ENCODE measurements at regions of chr10 and their contacts with region 1.

Region 1: GRCh38 chr10:69639291-69640195 is 9.5 kb downstream of the FAM241B start:
- DNase-seq: peak; percentile 67 to 77 (median 71)
- ATAC-seq: peak; percentile 74
- H3K4me3 ChIP-seq: no peak overlapping the region
- H3K27ac ChIP-seq: no peak overlapping the region
- H3K4me1 ChIP-seq: no peaks in the 10 kb centered on the region
- H3K27me3 ChIP-seq: no peaks in the 10 kb centered on the region
- CTCF ChIP-seq: peak; percentile 77 to 81 (median 80)
- POLR2A ChIP-seq: no peak

Region 2: DNA sequence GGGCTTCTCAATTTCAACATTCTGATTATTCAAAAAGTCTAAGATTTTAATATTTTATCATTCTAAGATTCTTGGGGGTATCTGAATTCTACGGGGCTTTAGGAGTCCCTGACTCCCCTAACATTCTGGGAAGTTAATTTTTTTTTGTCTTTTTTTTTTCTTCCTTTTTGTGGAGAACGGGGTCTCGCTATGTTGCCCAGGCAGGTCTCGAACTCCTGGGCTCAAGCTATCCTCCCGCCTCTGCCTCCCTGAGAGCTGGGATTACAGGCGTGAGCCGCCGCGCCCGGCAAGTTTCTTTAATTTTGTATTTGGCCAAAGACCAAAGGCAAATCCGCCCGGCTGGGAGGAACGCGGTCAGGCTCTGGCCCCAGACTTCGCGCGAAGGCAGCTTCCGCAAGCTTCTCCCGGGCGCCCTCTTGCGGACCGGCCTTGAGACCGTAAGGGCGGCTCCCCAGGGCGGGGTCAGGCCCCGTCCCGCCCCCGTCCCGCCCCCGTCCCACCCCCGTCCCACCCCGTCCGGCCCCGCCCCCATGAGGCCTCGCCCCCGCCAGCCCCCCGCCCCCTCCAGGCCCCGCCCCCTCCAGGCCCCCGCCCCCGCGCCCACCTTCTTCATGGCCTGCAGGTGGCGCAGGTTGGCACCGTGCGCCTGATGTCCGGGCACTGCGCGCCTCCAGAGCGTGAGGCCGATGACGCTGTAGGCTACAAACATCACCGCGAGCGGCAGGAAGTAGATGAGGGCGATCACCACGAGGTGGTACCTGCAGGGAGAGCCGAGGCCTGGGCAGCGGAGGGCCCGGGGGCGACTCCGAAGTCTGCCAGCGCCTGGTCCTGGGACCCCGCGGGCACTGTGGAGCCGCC is 231.0 kb before region 1 on chr10:
- intact Hi-C with region 1: loop called (anchors 10 kb)
- DNase-seq: peak; percentile 95 to 97 (median 96)
- ATAC-seq: peak; percentile 93
- H3K4me3 ChIP-seq: no peak overlapping the region
- H3K27ac ChIP-seq: peak overlapping the region; percentile 55 to 94 (median 88)
- H3K4me1 ChIP-seq: peaks cover 13% of the 10 kb centered on the region
- H3K27me3 ChIP-seq: no peaks in the 10 kb centered on the region
- CTCF ChIP-seq: peak; percentile 54 to 89 (median 73)
- POLR2A ChIP-seq: peak; percentile 13 to 69 (median 62)

Region 3: GRCh38 chr10:69464801-69465401 is 174.6 kb before region 1 on chr10:
- intact Hi-C with region 1: no loop called
- DNase-seq: peak in 1 of 4 donors; percentile 10
- ATAC-seq: no peak
- H3K4me3 ChIP-seq: no peak overlapping the region
- H3K27ac ChIP-seq: peak overlapping the region in 2 of 4 donors; percentile 1 to 38
- H3K4me1 ChIP-seq: peaks cover 46% of the 10 kb centered on the region
- H3K27me3 ChIP-seq: no peaks in the 10 kb centered on the region
- CTCF ChIP-seq: no peak
- POLR2A ChIP-seq: no peak

Region 4: DNA sequence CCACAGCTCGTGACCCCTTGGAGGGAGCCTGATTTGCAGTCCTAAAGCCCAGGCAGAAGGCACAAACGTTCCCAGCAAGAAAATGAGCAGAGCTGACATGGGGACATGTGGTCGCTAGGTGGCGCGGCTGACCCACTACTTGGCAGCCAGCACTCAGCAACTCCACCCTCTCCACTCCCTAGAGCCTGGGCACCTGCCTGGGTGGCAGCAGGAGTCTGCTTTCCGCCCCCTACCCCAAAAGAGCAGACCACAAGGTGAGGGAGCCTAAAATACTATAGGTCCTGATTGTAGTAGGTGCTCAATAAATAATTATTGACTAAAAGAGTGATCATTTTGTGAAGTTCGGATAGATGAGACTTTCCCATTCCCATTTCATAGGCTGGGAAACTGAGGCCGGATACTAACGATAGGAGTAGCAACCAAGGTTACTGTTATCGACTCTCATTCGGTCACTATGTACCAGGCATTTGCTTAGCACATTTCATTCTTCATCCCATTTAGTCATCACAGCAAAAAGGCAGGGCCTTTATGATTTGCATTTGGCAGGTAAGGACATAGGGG is 123.8 kb before region 1 on chr10:
- intact Hi-C with region 1: loop called (anchors 2 kb)
- DNase-seq: peak; percentile 74 to 83 (median 78)
- ATAC-seq: peak; percentile 92
- H3K4me3 ChIP-seq: no peak overlapping the region
- H3K27ac ChIP-seq: no peak overlapping the region
- H3K4me1 ChIP-seq: no peaks in the 10 kb centered on the region
- H3K27me3 ChIP-seq: no peaks in the 10 kb centered on the region
- CTCF ChIP-seq: peak; percentile 69 to 85 (median 83)
- POLR2A ChIP-seq: no peak

Region 5: DNA sequence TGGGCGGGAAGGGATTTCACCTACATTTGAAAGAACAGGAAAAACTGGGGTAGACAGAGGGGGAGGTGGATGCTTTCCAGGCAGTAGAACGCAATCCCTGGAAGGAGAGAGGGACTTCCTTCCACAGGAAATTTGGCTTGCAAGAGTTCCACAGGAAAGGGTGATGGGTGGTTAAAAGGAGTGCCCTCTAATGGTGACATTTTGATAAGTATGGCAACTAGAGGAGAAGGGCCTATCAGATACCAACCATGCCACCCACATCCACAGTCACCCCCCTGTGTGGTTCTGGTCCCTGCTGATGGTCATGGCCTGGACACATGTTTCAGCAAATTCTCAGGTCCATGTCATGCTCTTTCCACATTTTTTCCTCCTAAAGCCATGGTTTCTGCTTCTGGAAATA is 135.1 kb after region 1 on chr10:
- intact Hi-C with region 1: no loop called
- DNase-seq: no peak
- ATAC-seq: no peak
- H3K4me3 ChIP-seq: no peak overlapping the region
- H3K27ac ChIP-seq: no peak overlapping the region
- H3K4me1 ChIP-seq: peaks cover 4% of the 10 kb centered on the region
- H3K27me3 ChIP-seq: no peaks in the 10 kb centered on the region
- CTCF ChIP-seq: no peak
- POLR2A ChIP-seq: no peak

Measured in body of pancreas (tissue), 4 donors.